HEK293 (cell line): ENCODE measurements at regions of chr1 and their contacts with region 1.

Region 1: DNA sequence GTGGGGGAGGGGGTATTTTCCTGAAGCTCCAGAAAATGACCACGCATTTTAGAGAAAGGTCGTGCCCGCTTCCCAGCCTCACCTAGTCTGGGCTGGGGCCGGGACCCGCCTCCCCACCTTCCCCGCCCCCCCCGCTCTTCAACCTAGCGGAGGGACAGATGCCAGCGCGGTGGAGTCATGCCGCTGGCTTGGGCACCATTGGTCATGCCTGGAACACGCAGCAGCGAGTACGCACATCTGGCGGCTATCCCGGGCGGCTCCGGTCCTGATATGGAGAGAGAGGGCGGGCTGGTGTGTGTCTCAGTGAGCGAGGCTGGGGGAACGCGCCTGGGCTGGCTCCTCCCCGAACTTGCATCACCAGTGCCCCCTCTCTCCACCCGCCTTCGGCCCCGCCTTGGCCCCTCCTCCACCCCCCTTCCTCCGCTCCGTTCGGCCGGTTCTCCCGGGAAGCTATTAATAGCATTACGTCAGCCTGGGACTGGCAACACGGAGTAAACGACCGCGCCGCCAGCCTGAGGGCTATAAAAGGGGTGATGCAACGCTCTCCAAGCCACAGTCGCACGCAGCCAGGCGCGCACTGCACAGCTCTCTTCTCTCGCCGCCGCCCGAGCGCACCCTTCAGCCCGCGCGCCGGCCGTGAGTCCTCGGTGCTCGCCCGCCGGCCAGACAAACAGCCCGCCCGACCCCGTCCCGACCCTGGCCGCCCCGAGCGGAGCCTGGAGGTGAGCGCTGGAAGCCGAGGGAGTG is at the start of gene ATF3:
- H3K4me3 ChIP-seq: peak within 1 kb of the TSS; percentile 82
- H3K27ac ChIP-seq: peak within 1 kb of the TSS; percentile 78
- H3K4me1 ChIP-seq: peaks cover 14% of the 10 kb centered on the region
- CTCF ChIP-seq: peak; percentile 15; the same call in 1 of the 2 replicates

Region 2: DNA sequence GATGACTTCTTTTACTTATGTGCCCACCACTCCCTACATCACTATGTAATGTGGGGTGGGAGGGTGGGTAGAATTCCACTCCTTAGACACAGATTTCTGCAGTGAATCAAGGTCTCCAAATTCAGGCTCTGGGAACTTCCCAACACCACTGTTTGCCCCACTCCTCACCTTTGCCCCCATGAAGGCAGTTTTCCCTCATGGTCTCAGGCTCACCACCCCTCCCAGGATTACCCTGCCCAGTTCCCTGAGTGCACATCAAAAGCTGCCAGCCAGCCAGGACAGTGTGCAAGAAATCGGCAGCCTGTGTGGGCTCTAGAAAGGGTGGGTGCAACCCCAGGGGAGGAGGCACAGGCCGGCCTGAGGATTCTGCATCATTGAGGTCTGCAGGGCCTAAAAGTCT is 160.9 kb before region 1 on chr1:
- CTCF ChIA-PET with region 1: no interaction called
- POLR2A ChIA-PET with region 1: no interaction called
- H3K4me3 ChIP-seq: no peak overlapping the region
- H3K27ac ChIP-seq: no peak overlapping the region
- H3K4me1 ChIP-seq: no peaks in the 10 kb centered on the region
- CTCF ChIP-seq: no peak

Region 3: DNA sequence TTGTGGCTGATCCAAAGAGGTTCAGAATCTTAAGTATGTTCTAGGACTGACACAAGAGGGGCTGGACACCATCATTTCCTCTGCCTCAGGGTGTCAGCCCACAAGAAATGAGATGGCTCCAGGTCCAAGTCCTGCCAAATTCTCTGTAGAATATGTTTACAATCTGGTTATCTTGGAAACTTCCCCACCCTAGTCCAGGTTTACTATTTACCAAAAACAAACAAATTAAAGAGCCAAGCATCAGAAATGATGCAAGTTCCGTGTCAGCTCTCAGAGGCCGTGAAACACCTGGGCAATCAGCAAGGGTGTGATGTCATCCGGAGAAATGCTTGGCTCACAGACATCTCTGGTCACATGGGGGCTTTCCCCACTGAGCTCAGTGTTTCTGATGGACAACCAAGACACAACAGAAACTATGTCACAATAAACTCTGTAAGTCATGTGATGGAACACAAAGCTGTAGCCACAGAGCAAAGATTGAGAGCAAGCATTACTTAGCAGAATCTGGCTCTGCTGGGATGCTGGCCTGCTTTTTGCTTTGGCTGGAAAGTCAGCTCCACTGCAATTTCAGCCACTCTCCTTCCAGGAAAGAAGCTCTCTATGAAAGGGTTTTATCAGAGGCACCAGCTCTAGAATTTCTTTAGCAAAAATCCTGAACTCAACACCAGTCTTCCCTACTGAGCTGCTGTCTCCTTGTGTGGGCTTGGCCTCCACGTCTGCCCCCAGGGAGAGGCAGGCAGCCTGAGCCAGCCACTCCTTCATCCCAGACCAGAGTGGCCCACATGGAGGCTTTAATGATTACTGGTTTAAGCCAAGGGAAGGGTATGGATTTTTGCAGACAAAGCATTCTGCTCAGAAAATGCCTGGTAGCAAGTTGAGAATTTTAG is 119.7 kb before region 1 on chr1:
- CTCF ChIA-PET with region 1: interaction called, 3 read pairs
- POLR2A ChIA-PET with region 1: interaction called, 33 read pairs
- H3K4me3 ChIP-seq: no peak overlapping the region
- H3K27ac ChIP-seq: no peak overlapping the region
- H3K4me1 ChIP-seq: no peaks in the 10 kb centered on the region; the same call in 1 of the 2 replicates
- CTCF ChIP-seq: no peak

Region 4: DNA sequence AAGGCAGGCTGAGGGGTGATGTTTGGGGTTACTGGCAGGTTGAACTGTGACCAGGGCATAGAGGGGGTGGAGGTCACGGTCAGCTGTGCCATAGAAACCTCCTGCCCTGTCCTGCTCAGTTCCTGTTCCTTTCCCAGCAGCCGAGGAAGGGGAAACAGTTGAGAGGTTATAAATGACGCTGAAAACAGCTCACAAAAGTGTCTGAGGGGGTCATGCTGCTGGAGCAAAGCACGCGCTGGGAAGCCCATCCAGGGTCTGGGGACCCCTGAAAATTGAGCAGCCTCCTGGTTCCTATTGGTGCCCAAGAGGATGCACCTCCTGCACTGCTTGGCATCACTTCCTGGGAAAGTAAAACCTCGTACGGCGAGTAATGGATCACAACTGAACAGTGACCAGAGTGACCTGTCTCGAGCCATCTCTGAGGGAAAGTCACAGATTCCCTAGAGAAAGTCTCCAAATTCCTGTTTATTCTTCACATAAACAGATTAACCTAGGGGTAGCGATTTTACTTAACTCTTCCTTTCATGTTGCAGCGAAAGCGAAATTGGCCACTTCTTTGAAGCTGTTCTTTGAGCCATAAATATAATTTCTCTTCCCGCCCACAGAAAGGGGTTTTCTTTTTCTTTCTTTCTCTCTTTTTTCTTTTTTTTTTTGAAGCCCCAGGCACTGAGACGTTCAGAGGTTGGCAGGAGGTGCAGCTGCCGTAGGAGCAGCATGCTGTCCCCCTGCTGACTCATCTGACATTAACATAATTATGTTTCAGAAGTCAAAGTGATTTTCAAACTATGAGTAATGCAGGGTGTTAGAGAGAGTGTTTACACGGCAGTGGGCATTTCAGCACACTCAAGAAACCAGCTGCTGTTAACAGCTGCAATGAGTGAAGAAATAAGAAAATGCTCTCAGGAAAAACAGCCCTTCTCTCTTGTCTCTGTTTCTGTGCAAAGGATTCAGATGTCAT is 41.6 kb before region 1 on chr1:
- CTCF ChIA-PET with region 1: no interaction called
- POLR2A ChIA-PET with region 1: interaction called, 33 read pairs
- H3K4me3 ChIP-seq: peak overlapping the region; percentile 33
- H3K27ac ChIP-seq: 0 out of 2 replicates have a peak overlapping the region, but pooled peaks have one; percentile 8
- H3K4me1 ChIP-seq: peaks cover 5% of the 10 kb centered on the region
- CTCF ChIP-seq: no peak

Region 5: GRCh38 chr1:212595787-212596714 is 12.3 kb before region 1 on chr1:
- CTCF ChIA-PET with region 1: interaction called, 8 read pairs
- POLR2A ChIA-PET with region 1: interaction called, 79 read pairs
- H3K4me3 ChIP-seq: peak overlapping the region; percentile 3; the same call in 1 of the 2 replicates
- H3K27ac ChIP-seq: peak overlapping the region; percentile 42; the same call in 1 of the 2 replicates
- H3K4me1 ChIP-seq: no peaks in the 10 kb centered on the region; the same call in 1 of the 2 replicates
- CTCF ChIP-seq: no peak

Region 6: GRCh38 chr1:212665241-212666115 is 57.1 kb after region 1 on chr1:
- CTCF ChIA-PET with region 1: interaction called, 9 read pairs
- POLR2A ChIA-PET with region 1: interaction called, 12 read pairs
- H3K4me3 ChIP-seq: peak overlapping the region; percentile 82
- H3K27ac ChIP-seq: no peak overlapping the region; the same call in 1 of the 2 replicates
- H3K4me1 ChIP-seq: 0 out of 2 replicates have a peak, but pooled peaks cover 3% of the 10 kb centered on the region
- CTCF ChIP-seq: peak; percentile 99

Region 7: DNA sequence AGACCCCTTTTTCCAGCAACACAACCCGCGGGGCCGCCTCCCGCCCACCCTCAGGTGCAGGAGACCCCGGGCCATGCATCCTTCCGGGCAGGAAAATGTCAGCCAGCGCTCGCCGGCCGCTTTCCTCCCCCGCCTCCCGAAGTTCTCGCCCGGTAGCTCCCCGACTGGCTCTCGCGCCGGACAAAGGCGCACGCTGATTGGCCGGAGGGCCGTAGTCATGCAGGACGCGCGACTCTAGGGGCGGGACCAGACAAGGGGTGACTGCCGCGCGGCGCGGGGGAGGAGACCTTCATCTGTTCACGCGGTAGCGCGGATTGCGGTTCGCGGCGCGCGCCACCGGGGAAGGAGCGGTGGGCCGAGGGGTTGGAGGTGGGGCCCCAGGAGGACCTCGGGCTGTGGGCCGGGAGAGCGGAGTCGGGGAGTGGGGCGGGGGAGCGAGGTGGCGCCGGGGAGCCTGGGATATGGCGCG is 249.6 kb after region 1 on chr1 and contains the start of gene FLVCR1:
- CTCF ChIA-PET with region 1: no interaction called
- POLR2A ChIA-PET with region 1: interaction called, 10 read pairs
- H3K4me3 ChIP-seq: peak within 1 kb of the TSS; percentile 81
- H3K27ac ChIP-seq: peak within 1 kb of the TSS; percentile 84
- H3K4me1 ChIP-seq: peaks cover 5% of the 10 kb centered on the region; the same call in 1 of the 2 replicates
- CTCF ChIP-seq: no peak